CD8-positive, alpha-beta memory T cell (primary cell): ENCODE measurements at regions of chr4 and their contacts with region 1.

Region 1: GRCh38 chr4:40897557-40898203 is 147.9 kb downstream of the NSUN7 start:
- DNase-seq: peak; percentile 13 to 62 (median 37)
- H3K4me3 ChIP-seq: no peak overlapping the region
- H3K4me3 Mint-ChIP-seq: peak overlapping the region in 6 of 7 donors; percentile 44 to 76 (median 64)
- H3K27ac ChIP-seq: no peak overlapping the region
- H3K27ac Mint-ChIP-seq: peak overlapping the region in 1 of 8 donors; percentile 51
- H3K4me1 ChIP-seq: no peaks in the 10 kb centered on the region
- H3K4me1 Mint-ChIP-seq: peaks cover 5 to 9% (median 5%) of the 10 kb centered on the region in 3 donors
- H3K27me3 ChIP-seq: no peaks in the 10 kb centered on the region
- H3K27me3 Mint-ChIP-seq: peaks cover 0 to 1% of the 10 kb centered on the region in 2 donors

Region 2: GRCh38 chr4:40056716-40057585 is 840.7 kb before region 1 on chr4 and contains the start of gene N4BP2:
- CTCF ChIA-PET with region 1: interaction called, 12 read pairs
- POLR2A ChIA-PET with region 1: no interaction called
- DNase-seq: peak; percentile 53 to 82 (median 69)
- H3K4me3 ChIP-seq: peak within 1 kb of the TSS; percentile 96
- H3K4me3 Mint-ChIP-seq: peak within 1 kb of the TSS; percentile 89 to 98 (median 95)
- H3K27ac ChIP-seq: peak within 1 kb of the TSS; percentile 83
- H3K27ac Mint-ChIP-seq: peak within 1 kb of the TSS; percentile 91 to 99 (median 96)
- H3K4me1 ChIP-seq: peaks cover 21% of the 10 kb centered on the region
- H3K4me1 Mint-ChIP-seq: peaks cover 27 to 39% (median 32%) of the 10 kb centered on the region in 3 donors
- H3K27me3 ChIP-seq: no peaks in the 10 kb centered on the region
- H3K27me3 Mint-ChIP-seq: no peaks in the 10 kb centered on the region
- total RNA-seq, gene N4BP2: 18.0 to 21.1 TPM

Region 3: GRCh38 chr4:40685300-40685699 is 212.4 kb before region 1 on chr4:
- CTCF ChIA-PET with region 1: no interaction called
- POLR2A ChIA-PET with region 1: no interaction called
- DNase-seq: no peak
- H3K4me3 ChIP-seq: no peak overlapping the region
- H3K4me3 Mint-ChIP-seq: no peak overlapping the region
- H3K27ac ChIP-seq: no peak overlapping the region
- H3K27ac Mint-ChIP-seq: no peak overlapping the region
- H3K4me1 ChIP-seq: no peaks in the 10 kb centered on the region
- H3K4me1 Mint-ChIP-seq: no peaks in the 10 kb centered on the region
- H3K27me3 ChIP-seq: no peaks in the 10 kb centered on the region
- H3K27me3 Mint-ChIP-seq: peaks cover 0 to 2% of the 10 kb centered on the region in 2 donors

Region 4: DNA sequence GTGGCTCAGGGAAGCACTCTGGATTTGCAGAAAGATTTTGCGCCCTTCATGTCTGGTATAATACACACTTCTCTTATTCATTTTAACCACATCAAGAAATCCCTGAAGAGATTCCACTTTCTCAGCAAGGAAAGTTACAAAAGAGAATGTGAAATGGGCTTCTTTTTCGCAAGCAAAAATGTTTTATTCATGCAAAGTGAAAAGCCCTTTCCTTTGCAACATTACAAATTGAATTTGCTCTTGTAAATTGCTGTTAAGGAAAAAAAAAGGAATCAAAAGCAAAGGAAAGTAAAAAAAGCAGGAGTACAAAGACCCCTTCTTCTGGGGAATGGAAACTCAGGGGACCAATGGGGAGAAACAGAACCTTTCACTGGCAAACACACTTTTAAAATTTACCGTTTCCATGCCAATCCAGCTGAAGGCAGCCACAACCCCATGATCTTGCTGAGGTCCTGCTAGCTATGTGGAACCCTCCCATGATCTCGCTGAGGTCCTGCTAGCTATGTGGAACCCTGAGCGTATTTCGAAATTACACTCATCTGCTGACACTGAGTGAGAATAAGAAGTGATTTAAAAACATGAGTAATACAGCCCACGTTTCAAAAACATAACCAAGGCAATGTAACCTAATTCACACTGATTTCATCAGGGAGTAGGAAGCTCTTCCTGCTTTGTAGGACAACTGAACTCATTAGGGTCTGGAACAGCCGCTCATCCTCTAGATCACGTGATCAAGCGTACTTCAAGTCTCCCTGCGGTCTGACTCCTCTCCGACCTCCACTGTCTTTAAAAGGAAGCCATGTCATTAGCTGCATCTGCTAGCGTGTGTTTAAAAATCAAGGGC is 10.2 kb before region 1 on chr4:
- CTCF ChIA-PET with region 1: interaction called, 11 read pairs
- POLR2A ChIA-PET with region 1: no interaction called
- DNase-seq: no peak
- H3K4me3 ChIP-seq: no peak overlapping the region
- H3K4me3 Mint-ChIP-seq: no peak overlapping the region
- H3K27ac ChIP-seq: no peak overlapping the region
- H3K27ac Mint-ChIP-seq: no peak overlapping the region
- H3K4me1 ChIP-seq: no peaks in the 10 kb centered on the region
- H3K4me1 Mint-ChIP-seq: no peaks in the 10 kb centered on the region
- H3K27me3 ChIP-seq: no peaks in the 10 kb centered on the region
- H3K27me3 Mint-ChIP-seq: peaks cover 3 to 16% of the 10 kb centered on the region in 2 donors

Region 5: DNA sequence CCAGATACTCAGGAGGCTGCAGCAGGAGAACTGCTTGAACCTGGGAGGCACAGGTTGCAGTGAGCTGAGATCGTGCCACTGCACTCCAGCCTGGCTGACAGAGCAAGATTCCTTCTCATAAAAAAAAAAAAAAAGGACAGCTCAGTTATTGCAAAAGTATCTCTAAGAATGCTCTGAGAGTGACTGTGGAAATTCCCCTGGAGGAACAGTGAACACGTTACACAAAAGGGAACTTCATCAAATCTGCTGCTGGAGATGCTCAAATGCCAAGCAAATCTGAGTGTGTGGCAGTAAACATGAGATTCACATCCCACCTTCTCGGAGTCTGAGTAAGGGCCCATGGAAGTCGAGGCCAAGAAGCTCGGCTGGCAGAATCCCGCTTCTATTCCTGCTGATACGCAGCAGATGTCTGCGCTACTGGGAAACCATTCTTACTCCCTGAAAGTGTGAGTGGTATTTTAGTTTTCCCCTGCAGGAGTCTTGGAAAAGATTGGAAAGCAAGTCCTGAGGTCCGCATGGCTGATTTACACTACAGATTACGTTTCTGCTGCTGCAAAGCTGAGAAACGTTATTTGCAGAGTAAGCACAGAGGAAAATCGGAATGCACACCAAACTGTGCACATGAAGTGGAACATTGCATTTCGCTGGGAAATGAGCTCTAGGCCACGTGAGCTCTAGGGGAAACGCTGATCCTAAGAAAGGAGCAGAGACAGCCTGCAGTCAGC is 14.9 kb after region 1 on chr4:
- CTCF ChIA-PET with region 1: interaction called, 11 read pairs
- POLR2A ChIA-PET with region 1: no interaction called
- DNase-seq: no peak
- H3K4me3 ChIP-seq: no peak overlapping the region
- H3K4me3 Mint-ChIP-seq: no peak overlapping the region
- H3K27ac ChIP-seq: no peak overlapping the region
- H3K27ac Mint-ChIP-seq: peak overlapping the region in 1 of 8 donors; percentile 21
- H3K4me1 ChIP-seq: no peaks in the 10 kb centered on the region
- H3K4me1 Mint-ChIP-seq: peaks cover 6 to 13% (median 13%) of the 10 kb centered on the region in 3 donors
- H3K27me3 ChIP-seq: no peaks in the 10 kb centered on the region
- H3K27me3 Mint-ChIP-seq: peaks cover 3 to 17% of the 10 kb centered on the region in 2 donors

Region 6: DNA sequence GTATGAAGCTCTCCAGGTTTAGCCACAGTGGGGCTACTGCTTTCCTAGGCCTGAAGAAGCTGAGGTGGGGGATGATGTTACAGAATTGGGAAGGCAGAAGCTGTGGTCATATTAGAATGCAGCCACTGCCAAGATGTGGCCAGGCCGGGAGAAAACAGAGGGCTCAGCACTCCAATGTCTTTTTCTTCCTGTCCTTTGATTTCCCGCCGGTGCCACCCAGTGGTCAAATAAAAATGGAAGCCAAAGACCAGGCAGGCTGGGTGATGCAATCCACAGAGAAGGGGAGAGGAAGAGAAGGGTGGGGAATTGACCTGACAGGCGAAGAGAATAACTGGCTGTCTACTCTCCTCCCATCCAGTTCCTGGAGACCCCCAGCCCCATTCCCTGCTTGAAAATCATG is 1404.7 kb after region 1 on chr4:
- CTCF ChIA-PET with region 1: no interaction called
- POLR2A ChIA-PET with region 1: no interaction called
- DNase-seq: no peak
- H3K4me3 ChIP-seq: no peak overlapping the region
- H3K4me3 Mint-ChIP-seq: no peak overlapping the region
- H3K27ac ChIP-seq: no peak overlapping the region
- H3K27ac Mint-ChIP-seq: no peak overlapping the region
- H3K4me1 ChIP-seq: no peaks in the 10 kb centered on the region
- H3K4me1 Mint-ChIP-seq: no peaks in the 10 kb centered on the region
- H3K27me3 ChIP-seq: no peaks in the 10 kb centered on the region
- H3K27me3 Mint-ChIP-seq: peaks cover 15 to 28% of the 10 kb centered on the region in 2 donors